ENCODE measurements at regions of chr9 and their contacts with region 1.

Region 1: DNA sequence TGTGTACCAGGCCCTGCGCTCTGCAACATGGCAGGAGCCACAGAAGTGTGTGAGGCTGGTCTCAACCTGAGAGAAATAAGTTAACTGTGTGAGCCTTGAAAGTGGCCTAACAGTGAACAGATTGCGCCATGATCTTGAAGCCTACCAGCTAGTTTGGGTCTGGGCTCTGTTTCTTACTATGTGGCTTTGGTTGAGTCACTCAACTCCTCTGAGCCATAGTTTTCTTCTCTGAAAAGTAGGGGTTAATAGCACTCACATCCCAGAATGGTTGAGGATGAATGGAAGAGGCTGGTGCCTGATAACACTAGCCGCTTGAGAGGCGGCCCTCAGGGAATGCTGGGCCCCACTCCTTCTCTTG is 121.5 kb downstream of the RGS3 start:
- DNase-seq: no peak
- H3K27ac ChIP-seq: peak overlapping the region; percentile 50
- CTCF ChIP-seq: no peak

Region 2: GRCh38 chr9:113275157-113276131 is 309.6 kb before region 1 on chr9 and contains the starts of genes CDC26 and PRPF4:
- CTCF ChIA-PET with region 1: no interaction called
- POLR2A ChIA-PET with region 1: no interaction called
- DNase-seq: peak; percentile 99
- H3K27ac ChIP-seq: peak within 1 kb of the TSS; percentile 84
- CTCF ChIP-seq: no peak

Region 3: DNA sequence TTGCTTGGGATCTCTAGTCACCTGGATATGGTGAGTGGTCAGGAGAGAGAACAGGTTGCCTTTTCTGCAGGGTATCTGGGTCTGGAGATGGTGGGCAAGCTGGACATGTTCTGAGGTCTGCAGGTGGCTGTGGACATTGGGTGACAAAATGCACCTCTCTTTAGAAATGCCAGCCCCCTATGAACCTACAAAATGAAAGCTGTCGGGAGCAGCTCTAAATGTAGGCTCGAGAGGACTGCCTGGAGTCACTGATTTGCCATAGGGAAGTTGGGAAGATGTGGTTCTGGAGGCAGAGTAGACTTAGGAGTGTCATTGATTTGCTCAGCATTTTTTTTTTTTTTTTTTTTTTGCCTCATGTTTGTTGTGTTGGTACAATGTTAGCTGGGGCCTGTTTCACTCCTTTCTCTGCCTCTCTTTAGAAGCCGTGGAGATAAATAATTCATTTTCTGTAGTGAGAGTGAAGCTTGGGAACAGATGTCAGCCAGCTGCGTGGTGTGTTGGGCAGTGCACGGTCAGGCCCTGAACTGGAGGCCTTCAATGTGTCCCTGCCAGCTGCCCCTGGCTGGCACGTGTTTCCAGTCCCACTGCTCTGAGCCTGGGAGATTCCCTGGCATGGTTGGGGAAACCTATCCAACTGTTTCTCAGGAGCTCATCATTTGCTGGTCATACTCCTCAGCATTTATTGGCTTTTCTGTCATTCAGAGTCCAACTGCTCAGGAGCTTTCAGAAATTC is 116.2 kb before region 1 on chr9:
- CTCF ChIA-PET with region 1: interaction called, 3 read pairs
- POLR2A ChIA-PET with region 1: interaction called, 10 read pairs
- DNase-seq: no peak
- H3K27ac ChIP-seq: no peak overlapping the region
- CTCF ChIP-seq: no peak